CD8-positive, alpha-beta T cell (primary cell): ENCODE measurements at regions of chr2 and their contacts with region 1.

Region 1: DNA sequence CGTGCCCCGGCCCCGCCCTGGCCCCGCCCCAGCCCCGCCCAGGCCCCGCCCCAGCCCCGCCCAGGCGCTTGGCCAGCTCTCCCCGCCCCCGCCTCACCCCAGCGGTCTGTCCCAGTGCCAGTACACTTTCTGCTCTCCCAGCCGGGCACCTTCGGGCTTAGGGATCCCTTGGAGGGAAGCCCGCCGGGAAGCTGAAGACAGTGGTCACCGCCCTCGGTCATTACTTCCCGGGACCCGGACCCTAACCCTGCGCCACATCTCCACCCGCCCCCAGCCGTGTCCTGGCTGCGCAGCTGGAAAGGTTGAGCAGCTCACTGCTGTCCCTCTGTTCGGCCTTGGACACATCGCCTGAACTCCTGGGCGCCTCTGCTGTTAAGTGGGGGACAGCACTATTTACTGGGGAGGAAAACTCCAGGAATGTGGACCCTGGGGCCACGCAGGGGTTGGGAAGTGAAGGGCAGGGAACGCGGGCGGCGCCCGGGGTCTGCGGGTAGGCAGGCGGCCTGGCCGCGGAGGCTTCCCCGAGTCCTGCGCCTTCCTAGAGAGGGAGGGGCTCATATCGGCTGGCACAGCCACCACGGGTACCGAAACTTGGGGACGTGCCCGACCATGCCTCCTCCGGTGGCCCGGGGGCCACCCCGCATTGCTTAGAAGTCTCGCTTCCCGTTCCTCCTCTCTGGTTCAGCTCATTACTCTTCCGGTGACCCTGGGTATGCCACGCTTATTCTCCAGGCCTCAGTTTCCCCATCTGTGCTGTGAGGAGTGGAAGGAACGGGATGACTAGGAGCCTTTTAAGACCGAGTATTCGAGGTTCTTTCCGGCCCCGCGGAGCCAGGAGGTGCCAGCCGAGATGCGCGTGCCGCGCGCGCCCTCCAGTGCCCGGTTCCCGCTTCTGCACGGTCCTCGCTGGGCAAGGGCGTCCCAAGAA is 121.0 kb downstream of the GYPC start:
- DNase-seq: peak; percentile 63 to 93 (median 83)
- ATAC-seq: peak; percentile 86
- H3K4me3 ChIP-seq: peak overlapping the region; percentile 69 to 91
- H3K4me3 Mint-ChIP-seq: peak overlapping the region; percentile 94
- H3K27ac ChIP-seq: peak overlapping the region; percentile 33 to 54
- H3K27ac Mint-ChIP-seq: peak overlapping the region; percentile 94
- H3K4me1 ChIP-seq: peaks cover 4% of the 10 kb centered on the region
- H3K4me1 Mint-ChIP-seq: peaks cover 16% of the 10 kb centered on the region
- H3K27me3 ChIP-seq: no peaks in the 10 kb centered on the region
- H3K27me3 Mint-ChIP-seq: peaks cover 9% of the 10 kb centered on the region
- CTCF ChIP-seq: peak; percentile 95

Region 2: GRCh38 chr2:126244937-126245336 is 532.0 kb before region 1 on chr2:
- CTCF ChIA-PET with region 1: no interaction called
- POLR2A ChIA-PET with region 1: no interaction called
- intact Hi-C with region 1: loop called (anchors 2 to 5 kb)
- DNase-seq: peak in 4 of 9 experiments; percentile 9 to 20 (median 15)
- ATAC-seq: no peak
- H3K4me3 ChIP-seq: no peak overlapping the region
- H3K4me3 Mint-ChIP-seq: no peak overlapping the region
- H3K27ac ChIP-seq: no peak overlapping the region
- H3K27ac Mint-ChIP-seq: no peak overlapping the region
- H3K4me1 ChIP-seq: no peaks in the 10 kb centered on the region
- H3K4me1 Mint-ChIP-seq: no peaks in the 10 kb centered on the region
- H3K27me3 ChIP-seq: no peaks in the 10 kb centered on the region
- H3K27me3 Mint-ChIP-seq: peaks cover 7% of the 10 kb centered on the region
- CTCF ChIP-seq: no peak

Region 3: GRCh38 chr2:126399001-126399400 is 378.0 kb before region 1 on chr2:
- CTCF ChIA-PET with region 1: interaction called, 7 read pairs
- POLR2A ChIA-PET with region 1: no interaction called
- intact Hi-C with region 1: loop called (anchors 2 kb)
- DNase-seq: peak in 3 of 9 experiments; percentile 10 to 26 (median 12)
- ATAC-seq: no peak
- H3K4me3 ChIP-seq: no peak overlapping the region
- H3K4me3 Mint-ChIP-seq: no peak overlapping the region
- H3K27ac ChIP-seq: no peak overlapping the region
- H3K27ac Mint-ChIP-seq: no peak overlapping the region
- H3K4me1 ChIP-seq: no peaks in the 10 kb centered on the region
- H3K4me1 Mint-ChIP-seq: no peaks in the 10 kb centered on the region
- H3K27me3 ChIP-seq: no peaks in the 10 kb centered on the region
- H3K27me3 Mint-ChIP-seq: peaks cover 16% of the 10 kb centered on the region
- CTCF ChIP-seq: no peak

Region 4: DNA sequence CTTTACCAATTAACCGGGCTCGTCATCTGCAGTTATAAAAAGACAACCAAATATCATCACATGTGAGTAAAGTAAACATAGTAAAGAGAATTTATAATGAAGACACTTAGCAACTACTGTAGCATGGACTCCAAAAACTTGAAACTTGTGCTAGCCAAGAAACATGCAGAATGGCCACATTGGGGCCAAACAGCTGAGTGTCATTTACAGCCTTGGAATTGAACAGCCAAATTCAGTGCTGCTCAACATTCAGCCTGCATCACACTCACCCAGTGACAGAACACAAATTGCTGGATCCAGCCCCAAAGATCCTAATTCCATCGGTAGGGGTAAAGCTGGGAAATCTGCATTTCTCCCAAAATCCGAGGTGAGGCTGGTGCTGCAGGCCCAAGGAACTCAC is 345.8 kb before region 1 on chr2:
- CTCF ChIA-PET with region 1: no interaction called
- POLR2A ChIA-PET with region 1: no interaction called
- intact Hi-C with region 1: no loop called
- DNase-seq: no peak
- ATAC-seq: no peak
- H3K4me3 ChIP-seq: no peak overlapping the region
- H3K4me3 Mint-ChIP-seq: no peak overlapping the region
- H3K27ac ChIP-seq: no peak overlapping the region
- H3K27ac Mint-ChIP-seq: no peak overlapping the region
- H3K4me1 ChIP-seq: no peaks in the 10 kb centered on the region
- H3K4me1 Mint-ChIP-seq: no peaks in the 10 kb centered on the region
- H3K27me3 ChIP-seq: no peaks in the 10 kb centered on the region
- H3K27me3 Mint-ChIP-seq: peaks cover 6% of the 10 kb centered on the region
- CTCF ChIP-seq: no peak

Region 5: GRCh38 chr2:126527836-126528507 is 249.0 kb before region 1 on chr2:
- CTCF ChIA-PET with region 1: interaction called, 198 read pairs
- POLR2A ChIA-PET with region 1: interaction called, 11 read pairs
- intact Hi-C with region 1: loop called in 1 of 2 experiments (anchors 1 kb)
- DNase-seq: peak; percentile 49 to 83 (median 77)
- ATAC-seq: peak; percentile 73
- H3K4me3 ChIP-seq: no peak overlapping the region
- H3K4me3 Mint-ChIP-seq: no peak overlapping the region
- H3K27ac ChIP-seq: no peak overlapping the region
- H3K27ac Mint-ChIP-seq: no peak overlapping the region
- H3K4me1 ChIP-seq: no peaks in the 10 kb centered on the region
- H3K4me1 Mint-ChIP-seq: peaks cover 1% of the 10 kb centered on the region
- H3K27me3 ChIP-seq: no peaks in the 10 kb centered on the region
- H3K27me3 Mint-ChIP-seq: no peaks in the 10 kb centered on the region
- CTCF ChIP-seq: peak; percentile 78

Region 6: DNA sequence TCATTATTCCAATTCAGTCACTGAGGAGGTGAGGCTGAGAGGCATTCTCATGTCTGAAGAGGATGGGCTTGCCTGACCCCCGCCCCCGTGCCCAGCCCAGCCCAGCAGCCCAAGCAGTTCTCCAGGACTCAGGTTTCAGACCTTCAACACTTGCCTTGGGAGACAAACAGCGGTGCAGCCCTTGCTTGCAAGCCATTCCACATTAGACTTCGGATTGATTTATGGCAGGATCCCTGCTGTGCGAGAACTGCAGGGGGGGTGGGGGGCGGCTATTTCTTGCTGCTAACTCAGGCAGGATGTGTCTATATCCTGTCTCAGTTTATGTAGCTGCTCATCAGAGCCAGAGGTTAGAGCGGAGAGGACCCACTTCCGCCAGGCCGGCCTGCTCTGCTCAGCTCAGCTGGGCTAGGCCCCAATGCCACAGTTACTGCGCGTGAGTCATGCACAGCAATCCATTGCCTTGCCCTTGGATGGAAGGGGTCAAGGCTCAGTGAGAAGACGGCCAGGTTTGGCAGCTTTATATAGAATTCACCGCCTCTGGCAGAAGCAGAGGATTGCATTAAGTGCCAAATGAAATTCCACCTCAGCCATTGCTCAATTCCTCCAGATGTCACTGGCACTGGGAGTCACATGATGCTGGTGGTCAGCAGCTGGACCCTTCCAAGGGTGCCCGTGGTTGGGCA is 119.2 kb before region 1 on chr2:
- CTCF ChIA-PET with region 1: interaction called, 18 read pairs
- POLR2A ChIA-PET with region 1: interaction called, 4 read pairs
- intact Hi-C with region 1: loop called (anchors 1 to 5 kb)
- DNase-seq: peak; percentile 49 to 89 (median 79)
- ATAC-seq: peak; percentile 62
- H3K4me3 ChIP-seq: peak overlapping the region; percentile 80 to 96
- H3K4me3 Mint-ChIP-seq: peak overlapping the region; percentile 94
- H3K27ac ChIP-seq: peak overlapping the region; percentile 87 to 89
- H3K27ac Mint-ChIP-seq: peak overlapping the region; percentile 98
- H3K4me1 ChIP-seq: peaks cover 59% of the 10 kb centered on the region
- H3K4me1 Mint-ChIP-seq: peaks cover 75% of the 10 kb centered on the region
- H3K27me3 ChIP-seq: no peaks in the 10 kb centered on the region
- H3K27me3 Mint-ChIP-seq: no peaks in the 10 kb centered on the region
- CTCF ChIP-seq: no peak

Region 7: GRCh38 chr2:126699716-126700581 is 77.0 kb before region 1 on chr2:
- CTCF ChIA-PET with region 1: interaction called, 19 read pairs
- POLR2A ChIA-PET with region 1: interaction called, 3 read pairs
- intact Hi-C with region 1: no loop called
- DNase-seq: no peak
- ATAC-seq: no peak
- H3K4me3 ChIP-seq: no peak overlapping the region
- H3K4me3 Mint-ChIP-seq: no peak overlapping the region
- H3K27ac ChIP-seq: no peak overlapping the region
- H3K27ac Mint-ChIP-seq: peak overlapping the region; percentile 14
- H3K4me1 ChIP-seq: no peaks in the 10 kb centered on the region
- H3K4me1 Mint-ChIP-seq: peaks cover 7% of the 10 kb centered on the region
- H3K27me3 ChIP-seq: no peaks in the 10 kb centered on the region
- H3K27me3 Mint-ChIP-seq: no peaks in the 10 kb centered on the region
- CTCF ChIP-seq: no peak

Region 8: DNA sequence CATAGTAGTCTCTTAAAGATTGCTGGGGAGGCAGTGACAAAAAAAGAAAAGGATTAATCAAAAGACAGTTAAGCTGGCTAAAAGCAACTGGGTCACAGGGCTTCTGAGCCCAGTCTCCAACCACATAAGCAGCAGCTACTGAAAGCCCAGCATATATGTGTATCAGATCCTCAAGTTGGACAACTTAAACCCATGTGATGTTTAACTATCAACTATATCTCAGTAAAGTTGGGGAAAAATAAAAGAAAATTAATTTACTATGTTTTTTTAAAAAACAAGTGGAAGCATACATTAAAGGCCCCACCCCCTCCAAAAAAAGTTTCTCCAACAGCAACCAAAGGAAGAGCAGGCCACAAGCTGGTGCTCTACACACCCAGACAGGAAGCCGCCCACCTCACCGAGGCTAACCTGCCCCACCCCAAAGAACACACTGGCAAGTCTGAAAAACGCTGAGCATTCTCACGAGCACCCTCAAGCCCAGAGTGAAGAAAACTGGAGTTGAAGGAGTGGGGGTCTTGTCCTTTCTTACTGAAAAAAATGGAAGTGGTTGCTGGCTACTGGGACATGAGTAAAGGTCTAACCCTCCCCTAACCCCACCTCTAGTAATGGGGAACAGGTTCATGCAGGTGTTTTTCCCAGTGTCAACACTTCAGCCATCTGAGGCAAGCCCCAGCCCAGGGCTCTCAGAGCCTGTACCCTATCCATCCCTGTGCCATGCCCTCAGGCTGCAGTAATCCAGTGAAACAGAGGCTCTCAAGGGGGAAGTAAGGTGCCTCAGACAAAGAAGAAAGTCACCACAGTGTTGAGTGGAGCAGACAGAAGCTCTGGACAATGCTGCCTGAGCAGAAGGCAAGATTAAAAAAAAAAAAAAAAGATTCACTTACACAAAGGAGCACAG is 14.7 kb before region 1 on chr2:
- CTCF ChIA-PET with region 1: interaction called, 30 read pairs
- POLR2A ChIA-PET with region 1: interaction called, 10 read pairs
- intact Hi-C with region 1: loop called in 1 of 2 experiments (anchors 1 kb)
- DNase-seq: peak; percentile 22 to 81 (median 62)
- ATAC-seq: peak; percentile 93
- H3K4me3 ChIP-seq: peak overlapping the region; percentile 9 to 36
- H3K4me3 Mint-ChIP-seq: peak overlapping the region; percentile 76
- H3K27ac ChIP-seq: peak overlapping the region; percentile 49 to 64
- H3K27ac Mint-ChIP-seq: peak overlapping the region; percentile 97
- H3K4me1 ChIP-seq: peaks cover 53% of the 10 kb centered on the region
- H3K4me1 Mint-ChIP-seq: peaks cover 83% of the 10 kb centered on the region
- H3K27me3 ChIP-seq: no peaks in the 10 kb centered on the region
- H3K27me3 Mint-ChIP-seq: no peaks in the 10 kb centered on the region
- CTCF ChIP-seq: no peak